ENCODE measurements at regions of chr22 and their contacts with region 1.

Region 1: GRCh38 chr22:17910561-17911311 is 113.6 kb downstream of the MICAL3 start:
- DNase-seq: peak; percentile 75 to 87
- H3K4me3 ChIP-seq: no peak overlapping the region
- H3K27ac ChIP-seq: peak overlapping the region; percentile 62 to 77 (median 70)
- H3K4me1 ChIP-seq: peaks cover 28 to 32% of the 10 kb centered on the region in 2 donors
- H3K27me3 ChIP-seq: no peaks in the 10 kb centered on the region
- CTCF ChIP-seq: peak in 4 of 6 experiments; percentile 29 to 41 (median 38)
- POLR2A ChIP-seq: no peak

Region 2: DNA sequence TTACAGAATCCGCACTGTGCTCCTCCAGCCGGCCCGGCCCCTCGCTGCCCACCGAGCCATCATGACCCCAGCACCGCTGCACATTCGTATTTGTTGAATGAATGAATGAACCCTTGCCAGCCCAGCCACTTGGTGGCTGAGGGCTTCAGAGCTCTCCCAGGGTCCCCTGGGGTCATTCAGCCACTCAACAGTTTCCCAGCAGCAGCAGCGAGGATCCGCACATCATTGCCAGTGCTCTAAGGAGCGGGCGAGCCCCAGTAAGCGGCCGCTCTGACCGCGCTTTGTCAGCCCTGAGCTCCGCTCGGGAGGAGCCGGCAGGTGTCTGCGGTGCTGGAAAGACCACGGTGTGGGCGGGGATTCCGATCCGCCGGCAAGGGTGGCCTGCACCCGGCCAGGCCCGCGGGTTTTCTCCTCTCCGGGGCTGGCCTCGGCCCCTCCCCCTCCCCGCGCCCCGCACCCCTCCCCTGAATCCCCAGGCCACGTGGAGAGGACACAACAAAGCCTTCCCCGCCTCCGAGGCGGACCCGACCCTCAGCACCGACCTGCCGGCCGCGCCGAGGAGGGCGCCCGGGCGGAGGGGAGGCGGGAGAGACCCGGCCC is 137.0 kb before region 1 on chr22:
- intact Hi-C with region 1: no loop called
- DNase-seq: peak; percentile 52 to 60
- H3K4me3 ChIP-seq: peak overlapping the region in 2 of 3 donors; percentile 73 to 84
- H3K27ac ChIP-seq: peak overlapping the region in 1 of 3 donors; percentile 11
- H3K4me1 ChIP-seq: peaks cover 8 to 14% of the 10 kb centered on the region in 2 donors
- H3K27me3 ChIP-seq: no peaks in the 10 kb centered on the region
- CTCF ChIP-seq: no peak
- POLR2A ChIP-seq: no peak

Region 3: GRCh38 chr22:18001040-18001893 is 90.5 kb after region 1 on chr22:
- intact Hi-C with region 1: loop called (anchors 5 kb)
- DNase-seq: peak; percentile 88 to 90
- H3K4me3 ChIP-seq: peak overlapping the region; percentile 31 to 61 (median 51)
- H3K27ac ChIP-seq: peak overlapping the region; percentile 87 to 93 (median 89)
- H3K4me1 ChIP-seq: peaks cover 9 to 22% of the 10 kb centered on the region in 2 donors
- H3K27me3 ChIP-seq: no peaks in the 10 kb centered on the region
- CTCF ChIP-seq: peak in 4 of 6 experiments; percentile 12 to 57 (median 43)
- POLR2A ChIP-seq: peak; percentile 68 to 94